Kidney (tissue), 22 donors: ENCODE measurements at regions of chr6 and their contacts with region 1.

Region 1: GRCh38 chr6:108888745-108889144 is 40.5 kb downstream of the ARMC2 start:
- DNase-seq: no peak
- H3K4me3 ChIP-seq: no peak overlapping the region
- H3K27ac ChIP-seq: no peak overlapping the region
- H3K4me1 ChIP-seq: no peaks in the 10 kb centered on the region
- H3K27me3 ChIP-seq: no peaks in the 10 kb centered on the region
- CTCF ChIP-seq: no peak

Region 2: DNA sequence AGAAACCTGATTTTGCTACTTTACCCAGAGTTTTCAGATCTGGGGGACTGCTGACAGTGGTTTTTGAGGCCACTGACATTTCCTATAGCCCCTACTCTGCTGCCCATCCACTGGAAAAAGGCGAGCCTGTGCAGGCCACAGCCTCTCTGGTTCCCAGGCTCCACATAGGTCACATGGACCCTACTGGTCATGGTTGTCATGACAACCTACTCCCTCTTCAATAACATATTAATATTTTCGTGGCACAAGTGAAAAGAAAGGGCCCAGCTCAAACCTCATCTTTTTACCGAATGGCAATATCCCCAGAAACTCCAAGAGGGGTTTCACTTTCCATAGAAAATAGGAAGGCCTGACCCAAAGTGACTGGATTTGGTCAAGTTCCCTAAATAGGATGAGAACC is 339.0 kb before region 1 on chr6:
- intact Hi-C with region 1: loop called (anchors 5 kb)
- DNase-seq: no peak
- H3K4me3 ChIP-seq: no peak overlapping the region
- H3K27ac ChIP-seq: no peak overlapping the region
- H3K4me1 ChIP-seq: no peaks in the 10 kb centered on the region
- H3K27me3 ChIP-seq: no peaks in the 10 kb centered on the region
- CTCF ChIP-seq: no peak

Region 3: DNA sequence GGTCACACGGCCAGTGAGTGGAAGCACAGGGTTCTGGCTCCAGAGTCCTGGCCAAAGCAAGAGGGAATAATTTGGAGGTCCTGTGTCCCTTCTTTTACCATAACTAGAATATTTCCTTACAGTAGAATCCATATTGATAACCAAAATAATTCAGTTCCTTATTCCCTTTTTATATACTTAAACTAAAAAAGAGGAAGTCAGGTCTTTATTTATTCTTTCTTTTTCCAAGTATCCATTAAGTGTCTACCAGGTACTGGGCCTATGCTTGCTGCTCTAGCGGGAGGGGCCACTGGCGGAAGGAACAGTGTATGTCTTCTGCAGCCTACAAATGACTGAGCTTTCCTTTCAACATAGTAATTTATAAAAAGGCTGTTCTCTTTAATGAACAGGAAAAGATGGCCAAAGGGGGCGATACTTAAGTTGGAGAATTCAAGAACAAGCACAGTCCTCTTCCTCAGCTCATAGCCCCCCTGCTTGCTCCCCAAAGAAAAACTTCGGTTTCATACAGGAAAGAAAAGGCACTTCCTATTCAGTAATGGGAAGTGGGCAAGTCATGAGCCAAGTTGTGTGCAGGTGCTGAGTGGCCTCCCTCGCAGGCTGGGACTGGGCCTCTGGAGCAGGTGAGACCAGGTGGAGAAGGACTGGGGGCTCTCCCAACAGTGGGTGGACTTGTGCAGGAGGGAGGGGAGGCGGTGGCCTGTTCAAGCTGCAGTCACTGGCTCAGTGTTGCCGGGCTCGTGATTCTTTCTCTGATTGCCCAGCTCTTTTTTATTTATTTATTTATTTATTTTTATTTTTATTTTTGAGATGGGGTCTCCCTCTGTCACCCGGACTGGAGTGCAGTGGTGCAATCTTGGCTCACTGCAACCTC is 70.4 kb after region 1 on chr6:
- intact Hi-C with region 1: no loop called
- DNase-seq: no peak
- H3K4me3 ChIP-seq: no peak overlapping the region
- H3K27ac ChIP-seq: no peak overlapping the region
- H3K4me1 ChIP-seq: peaks cover 0 to 3% (median 0%) of the 10 kb centered on the region in 3 donors
- H3K27me3 ChIP-seq: no peaks in the 10 kb centered on the region
- CTCF ChIP-seq: no peak